ENCODE measurements at regions of chr5 and their contacts with region 1.

Region 1: GRCh38 chr5:175464074-175464941 is 14.1 kb upstream of the SFXN1 start:
- DNase-seq: peak; percentile 38 to 76 (median 58)
- ATAC-seq: peak; percentile 99
- H3K4me3 ChIP-seq: no peak overlapping the region
- H3K4me3 Mint-ChIP-seq: no peak overlapping the region
- H3K27ac ChIP-seq: no peak overlapping the region
- H3K27ac Mint-ChIP-seq: no peak overlapping the region
- H3K4me1 ChIP-seq: peaks cover 7% of the 10 kb centered on the region
- H3K4me1 Mint-ChIP-seq: peaks cover 6% of the 10 kb centered on the region
- H3K27me3 ChIP-seq: no peaks in the 10 kb centered on the region
- H3K27me3 Mint-ChIP-seq: peaks cover 4% of the 10 kb centered on the region
- CTCF ChIP-seq: peak; percentile 83

Region 2: DNA sequence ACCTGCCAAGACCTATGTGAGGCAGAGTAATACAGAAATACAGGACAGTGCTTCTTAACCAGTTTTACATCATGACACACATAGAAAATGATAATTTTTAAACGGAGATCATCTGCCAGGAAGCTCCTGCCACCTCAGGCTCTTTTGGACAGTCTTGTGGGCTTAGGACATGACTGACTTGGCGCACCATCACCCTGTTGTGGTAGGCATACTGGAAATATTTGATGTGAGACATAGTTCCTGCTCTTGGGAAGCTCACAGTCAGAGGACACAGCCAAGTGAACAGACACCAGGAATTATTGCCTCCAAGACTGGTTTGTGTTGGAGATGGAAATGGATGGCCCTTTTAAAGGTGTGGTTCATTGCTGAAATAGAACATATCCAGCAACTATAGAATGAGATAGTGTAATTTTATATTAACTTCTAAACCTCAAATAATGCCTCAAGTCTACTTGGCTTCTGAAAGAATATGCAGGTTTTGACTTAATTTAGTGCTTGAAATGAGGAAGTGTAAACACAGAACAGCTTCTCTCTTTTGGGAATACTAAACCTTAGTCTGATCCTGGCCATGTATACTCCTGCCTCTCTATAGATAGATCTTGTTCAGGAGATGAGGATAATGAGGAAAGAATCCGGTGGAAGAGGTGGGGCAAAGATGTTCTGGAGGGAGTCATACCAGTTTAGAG is 1556.5 kb before region 1 on chr5:
- CTCF ChIA-PET with region 1: no interaction called
- POLR2A ChIA-PET with region 1: no interaction called
- intact Hi-C with region 1: no loop called
- DNase-seq: no peak
- ATAC-seq: no peak
- H3K4me3 ChIP-seq: no peak overlapping the region
- H3K4me3 Mint-ChIP-seq: no peak overlapping the region
- H3K27ac ChIP-seq: no peak overlapping the region
- H3K27ac Mint-ChIP-seq: no peak overlapping the region
- H3K4me1 ChIP-seq: no peaks in the 10 kb centered on the region
- H3K4me1 Mint-ChIP-seq: peaks cover 38% of the 10 kb centered on the region
- H3K27me3 ChIP-seq: no peaks in the 10 kb centered on the region
- H3K27me3 Mint-ChIP-seq: no peaks in the 10 kb centered on the region
- CTCF ChIP-seq: no peak

Region 3: GRCh38 chr5:175452166-175452565 is 12.1 kb before region 1 on chr5:
- CTCF ChIA-PET with region 1: interaction called, 14 read pairs
- POLR2A ChIA-PET with region 1: no interaction called
- intact Hi-C with region 1: no loop called
- DNase-seq: no peak
- ATAC-seq: no peak
- H3K4me3 ChIP-seq: no peak overlapping the region
- H3K4me3 Mint-ChIP-seq: no peak overlapping the region
- H3K27ac ChIP-seq: no peak overlapping the region
- H3K27ac Mint-ChIP-seq: no peak overlapping the region
- H3K4me1 ChIP-seq: no peaks in the 10 kb centered on the region
- H3K4me1 Mint-ChIP-seq: no peaks in the 10 kb centered on the region
- H3K27me3 ChIP-seq: peaks cover 9 to 12% of the 10 kb centered on the region in 2 experiments
- H3K27me3 Mint-ChIP-seq: peaks cover 63% of the 10 kb centered on the region
- CTCF ChIP-seq: no peak

Region 4: DNA sequence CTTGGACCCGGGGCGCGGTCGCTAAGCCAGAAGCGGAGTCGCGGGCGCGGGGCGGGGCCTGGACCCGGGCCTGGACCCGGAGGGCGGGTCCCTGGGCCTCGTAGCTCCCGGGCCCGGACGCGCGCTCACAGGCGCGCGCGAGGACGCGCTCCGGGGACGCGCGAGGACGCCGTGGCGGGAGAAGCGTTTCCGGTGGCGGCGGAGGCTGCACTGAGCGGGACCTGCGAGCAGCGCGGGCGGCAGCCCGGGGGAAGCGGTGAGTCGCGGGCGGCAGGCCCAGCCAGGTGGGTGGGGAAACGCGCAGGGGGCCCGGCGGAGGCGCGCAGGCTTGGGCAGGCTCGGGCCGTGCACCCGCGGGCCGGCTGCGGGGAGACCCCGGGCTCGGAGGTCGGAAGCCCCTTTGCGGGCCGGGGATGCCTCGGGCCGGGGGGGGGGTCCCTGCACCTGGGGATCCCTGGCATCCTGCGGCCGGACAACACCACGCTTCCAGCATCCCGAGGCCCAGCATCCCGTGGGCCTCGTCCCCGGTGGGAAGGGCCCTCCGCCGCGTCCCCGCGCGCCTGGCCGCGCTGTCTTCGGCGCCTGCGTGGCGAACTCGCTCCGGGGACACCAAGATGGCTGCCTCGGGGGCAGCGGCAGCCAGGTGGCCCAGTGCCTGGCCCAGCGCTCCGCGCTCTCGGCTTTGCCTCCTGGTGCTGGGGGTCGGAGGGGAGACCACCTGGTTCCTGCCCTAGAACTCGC is 14.2 kb after region 1 on chr5 and contains the start of gene SFXN1:
- CTCF ChIA-PET with region 1: interaction called, 16 read pairs
- POLR2A ChIA-PET with region 1: interaction called, 31 read pairs
- intact Hi-C with region 1: loop called in 1 of 2 experiments (anchors 1 kb)
- DNase-seq: peak; percentile 51 to 88 (median 74)
- ATAC-seq: peak; percentile 40
- H3K4me3 ChIP-seq: peak within 1 kb of the TSS; percentile 84
- H3K4me3 Mint-ChIP-seq: peak within 1 kb of the TSS; percentile 98
- H3K27ac ChIP-seq: peak within 1 kb of the TSS; percentile 48 to 60
- H3K27ac Mint-ChIP-seq: peak within 1 kb of the TSS; percentile 92
- H3K4me1 ChIP-seq: peaks cover 41% of the 10 kb centered on the region
- H3K4me1 Mint-ChIP-seq: peaks cover 57% of the 10 kb centered on the region
- H3K27me3 ChIP-seq: no peaks in the 10 kb centered on the region
- H3K27me3 Mint-ChIP-seq: peaks cover 9% of the 10 kb centered on the region
- CTCF ChIP-seq: no peak
- total RNA-seq, gene SFXN1: 133 to 138 TPM

Measured in CD4-positive, alpha-beta T cell (primary cell).